Aorta (tissue), 5 donors: ENCODE measurements at regions of chr2 and their contacts with region 1.

Region 1: DNA sequence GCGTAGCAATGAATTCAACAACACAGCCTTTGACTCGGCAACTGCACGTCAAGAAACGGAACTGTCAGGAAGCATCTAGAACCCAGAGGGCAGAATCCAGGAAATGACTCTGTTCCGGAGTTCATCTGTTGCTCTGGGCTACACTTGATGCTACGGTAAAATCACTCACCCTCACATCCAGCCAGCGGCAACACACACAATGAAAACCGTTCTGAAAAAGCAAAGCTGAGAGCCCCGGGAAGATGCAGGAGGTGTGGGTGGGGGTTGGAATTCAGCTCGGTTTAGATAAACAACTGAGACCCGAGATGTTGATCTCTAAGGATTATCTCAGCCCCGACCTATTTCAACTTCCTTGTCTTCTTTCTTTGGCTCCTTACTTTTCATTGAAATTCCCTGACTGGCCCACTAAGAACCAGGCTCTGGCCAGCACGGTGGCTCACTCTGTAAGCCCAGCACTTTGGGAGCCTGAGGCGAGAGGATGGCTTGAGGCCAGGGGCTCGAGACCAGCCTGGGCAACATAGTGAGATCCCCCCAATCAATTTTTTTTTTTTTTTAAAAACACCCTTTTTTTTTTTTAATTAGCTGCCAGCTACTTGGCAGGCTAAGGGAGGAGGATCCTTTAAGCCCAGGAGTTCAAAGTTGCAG is 13.3 kb upstream of the RAB17 start:
- DNase-seq: peak in 1 of 2 donors; percentile 66
- ATAC-seq: peak; percentile 55
- H3K4me3 ChIP-seq: no peak overlapping the region
- H3K27ac ChIP-seq: peak overlapping the region in 1 of 2 donors; percentile 19
- H3K4me1 ChIP-seq: peaks cover 0 to 2% of the 10 kb centered on the region in 2 donors
- H3K27me3 ChIP-seq: no peaks in the 10 kb centered on the region

Region 2: DNA sequence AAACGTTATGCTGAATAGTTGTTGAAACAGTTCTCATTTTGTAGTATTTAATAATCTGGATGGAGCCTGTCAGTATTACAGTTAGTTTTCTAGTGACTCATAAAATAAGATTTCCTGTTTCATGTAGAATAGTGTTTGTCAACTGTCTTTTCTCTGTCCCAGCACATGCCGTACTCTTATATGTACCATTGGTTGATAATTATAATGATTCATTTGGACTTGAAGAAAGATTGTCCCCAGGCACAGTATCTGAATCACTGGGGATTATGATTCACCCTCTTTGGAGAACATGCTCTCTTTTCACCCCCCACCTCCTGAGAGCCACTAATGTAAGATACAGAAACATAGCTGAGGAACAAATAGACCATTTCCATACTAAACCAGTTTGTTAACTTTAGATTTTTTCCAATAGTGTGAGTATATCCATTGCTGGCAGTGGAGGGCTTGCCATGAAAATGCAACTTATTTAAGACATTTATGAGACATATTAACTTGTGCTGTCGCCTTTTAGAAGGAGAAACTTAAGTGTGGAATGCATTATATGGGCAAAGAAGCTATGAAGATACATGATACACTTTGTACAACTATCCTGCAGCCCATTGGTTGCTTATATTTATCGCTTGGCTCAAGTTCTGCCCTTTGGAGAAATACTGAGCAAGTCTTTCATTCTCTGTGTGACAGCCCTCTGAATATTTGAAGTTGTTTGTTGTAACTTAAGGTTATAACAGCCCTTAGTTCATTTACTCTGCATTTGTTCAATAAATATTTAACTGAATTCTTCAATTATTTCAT is 505.7 kb before region 1 on chr2:
- intact Hi-C with region 1: no loop called
- DNase-seq: no peak
- ATAC-seq: no peak
- H3K4me3 ChIP-seq: no peak overlapping the region
- H3K27ac ChIP-seq: no peak overlapping the region
- H3K4me1 ChIP-seq: no peaks in the 10 kb centered on the region
- H3K27me3 ChIP-seq: no peaks in the 10 kb centered on the region

Region 3: DNA sequence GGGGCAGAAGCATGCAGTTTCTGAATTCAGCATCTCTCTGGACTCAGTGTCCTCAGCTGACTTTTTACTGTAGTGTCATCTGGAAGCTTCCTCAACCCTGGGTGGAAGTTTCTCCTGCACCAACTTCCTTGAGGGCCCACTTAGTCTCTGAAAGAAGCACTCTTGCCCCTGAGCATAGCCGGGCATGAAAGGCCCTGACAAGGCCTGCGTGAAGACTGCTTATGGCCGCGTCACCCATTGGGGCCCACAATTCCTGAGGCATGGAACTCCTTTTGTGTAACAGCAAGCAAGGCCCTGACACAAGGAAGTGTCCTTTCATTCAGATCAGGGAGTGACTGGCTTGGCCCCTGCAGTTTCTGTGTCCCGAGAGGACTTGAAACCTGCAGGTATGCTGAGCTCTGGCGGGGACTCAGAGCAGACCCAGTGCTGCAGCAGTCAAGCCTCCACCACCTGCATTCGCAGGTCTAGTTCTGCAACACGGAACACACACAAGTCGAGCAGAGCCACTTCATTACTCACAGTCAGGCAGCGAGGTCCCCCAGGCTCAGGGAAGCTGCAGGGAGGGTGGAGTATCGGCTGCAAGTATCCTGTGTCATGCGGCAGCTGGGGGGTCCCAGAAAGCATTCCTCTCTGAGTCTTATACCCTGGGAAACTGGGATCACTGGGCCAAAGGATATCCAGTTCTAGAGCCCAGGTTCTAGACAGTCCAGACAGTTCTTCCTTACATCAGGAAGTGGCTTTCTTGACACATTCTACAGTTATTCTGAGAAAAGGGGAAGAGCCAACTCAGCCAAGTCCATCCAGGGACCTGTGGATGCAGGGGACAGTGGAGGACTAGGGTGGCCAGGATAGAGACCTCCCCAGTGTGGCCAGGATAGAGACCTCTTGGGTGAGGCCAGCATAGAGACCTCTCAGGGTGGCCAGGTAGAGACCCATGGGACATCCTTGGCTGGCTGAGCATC is 73.1 kb before region 1 on chr2:
- intact Hi-C with region 1: no loop called
- DNase-seq: no peak
- ATAC-seq: no peak
- H3K4me3 ChIP-seq: no peak overlapping the region
- H3K27ac ChIP-seq: no peak overlapping the region
- H3K4me1 ChIP-seq: no peaks in the 10 kb centered on the region
- H3K27me3 ChIP-seq: no peaks in the 10 kb centered on the region

Region 4: DNA sequence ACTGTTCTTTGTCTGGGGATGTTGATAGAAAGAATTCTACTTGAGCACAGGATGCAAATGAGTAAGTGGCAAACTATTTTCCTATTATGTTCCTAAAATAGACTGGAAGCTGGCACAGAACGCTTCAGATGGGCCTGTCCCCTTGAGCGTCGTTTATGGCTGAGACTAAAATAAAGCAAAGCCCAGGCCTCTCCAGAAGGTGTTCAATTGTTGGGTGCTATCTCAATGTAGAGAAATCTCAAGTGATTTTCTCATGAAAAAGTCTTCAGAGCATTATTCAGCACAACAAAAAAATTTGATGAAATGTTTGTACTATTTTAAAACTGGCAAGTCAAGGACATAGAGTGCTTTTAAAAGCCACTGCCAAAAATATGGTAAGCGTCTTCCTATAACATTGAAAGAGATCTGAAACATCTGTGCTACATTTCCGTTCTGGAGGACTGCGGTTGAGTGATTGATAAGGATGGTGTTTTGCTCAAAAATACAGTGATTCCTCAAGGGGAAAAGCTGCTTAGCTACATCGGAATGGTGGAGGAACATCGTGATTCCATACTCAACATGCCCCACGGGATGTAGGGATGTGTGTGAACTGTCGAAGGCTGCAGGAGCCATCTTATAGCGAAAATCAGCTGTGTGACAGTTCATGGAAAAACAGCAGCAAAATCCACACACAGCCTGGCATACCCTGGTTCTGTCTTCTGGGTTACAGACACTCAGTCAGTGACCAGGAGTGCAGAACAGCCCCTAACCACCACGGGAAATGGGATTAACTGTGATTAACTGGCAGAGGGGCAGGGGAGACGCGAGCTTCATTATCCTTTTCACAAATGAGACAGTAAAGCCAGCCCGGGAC is 13.1 kb after region 1 on chr2:
- intact Hi-C with region 1: loop called in 1 of 2 experiments (anchors 2 kb)
- DNase-seq: no peak
- ATAC-seq: peak; percentile 80
- H3K4me3 ChIP-seq: no peak overlapping the region
- H3K27ac ChIP-seq: peak overlapping the region; percentile 87 to 98
- H3K4me1 ChIP-seq: peaks cover 0 to 12% of the 10 kb centered on the region in 2 donors
- H3K27me3 ChIP-seq: no peaks in the 10 kb centered on the region

Region 5: GRCh38 chr2:237662671-237663093 is 58.8 kb after region 1 on chr2:
- intact Hi-C with region 1: loop called in 1 of 2 experiments (anchors 5 kb)
- DNase-seq: peak; percentile 96 to 97
- ATAC-seq: peak; percentile 91
- H3K4me3 ChIP-seq: no peak overlapping the region
- H3K27ac ChIP-seq: peak overlapping the region; percentile 63 to 64
- H3K4me1 ChIP-seq: no peaks in the 10 kb centered on the region
- H3K27me3 ChIP-seq: no peaks in the 10 kb centered on the region

Region 6: DNA sequence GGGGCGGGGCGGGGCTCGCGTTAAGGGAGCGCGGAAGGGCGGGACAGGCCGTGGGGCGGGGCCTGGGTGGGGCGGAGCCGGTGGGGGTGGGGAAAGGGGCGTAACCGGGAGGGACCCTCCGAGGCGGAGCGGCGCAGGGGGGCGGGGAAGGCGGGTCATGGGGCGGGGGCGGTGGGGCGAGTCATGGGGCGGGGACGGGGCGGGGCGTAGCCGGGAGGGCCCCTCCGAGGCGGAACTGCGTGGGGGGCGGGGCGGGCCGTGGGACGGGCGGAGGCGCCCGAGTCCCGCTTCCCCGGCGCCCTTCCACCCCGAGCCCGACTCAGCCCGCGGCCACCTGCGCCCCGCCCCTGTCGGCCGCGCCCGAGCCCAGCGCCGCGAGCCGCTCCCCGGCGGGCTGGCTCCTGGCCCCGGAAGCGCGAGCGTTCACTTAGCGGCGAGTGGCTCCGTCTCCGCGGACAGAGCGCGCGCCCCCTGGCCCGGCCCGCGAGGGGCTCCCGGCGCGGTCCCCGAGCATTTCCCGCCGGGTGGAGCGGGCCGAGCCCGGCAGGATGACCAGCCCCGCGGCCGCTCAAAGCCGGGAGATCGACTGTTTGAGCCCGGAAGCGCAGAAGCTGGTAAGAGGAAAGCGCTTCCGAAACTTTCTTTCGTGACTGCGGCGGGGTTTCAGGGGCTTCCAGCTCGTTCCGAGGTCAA is 88.2 kb after region 1 on chr2:
- intact Hi-C with region 1: loop called in 1 of 2 experiments (anchors 1 kb)
- DNase-seq: peak; percentile 98 to 99
- ATAC-seq: peak; percentile 85
- H3K4me3 ChIP-seq: peak overlapping the region; percentile 70 to 86
- H3K27ac ChIP-seq: peak overlapping the region; percentile 78 to 90
- H3K4me1 ChIP-seq: peaks cover 3 to 8% of the 10 kb centered on the region in 2 donors
- H3K27me3 ChIP-seq: no peaks in the 10 kb centered on the region